AG04449 (cell line): ENCODE measurements at regions of chr18 and their contacts with region 1.

Region 1: GRCh38 chr18:63016270-63016669 is 300.9 kb downstream of the PHLPP1 start:
- DNase-seq: peak; percentile 3
- H3K4me3 ChIP-seq: no peak overlapping the region
- CTCF ChIP-seq: peak; percentile 63

Region 2: GRCh38 chr18:63031375-63031774 is 15.1 kb after region 1 on chr18:
- CTCF ChIA-PET with region 1: interaction called, 21 read pairs
- POLR2A ChIA-PET with region 1: no interaction called
- DNase-seq: no peak
- H3K4me3 ChIP-seq: no peak overlapping the region
- CTCF ChIP-seq: no peak

Region 3: GRCh38 chr18:63131106-63131958 is 115.1 kb after region 1 on chr18:
- CTCF ChIA-PET with region 1: interaction called, 14 read pairs
- POLR2A ChIA-PET with region 1: no interaction called
- DNase-seq: no peak
- H3K4me3 ChIP-seq: no peak overlapping the region
- CTCF ChIP-seq: peak; percentile 49

Region 4: DNA sequence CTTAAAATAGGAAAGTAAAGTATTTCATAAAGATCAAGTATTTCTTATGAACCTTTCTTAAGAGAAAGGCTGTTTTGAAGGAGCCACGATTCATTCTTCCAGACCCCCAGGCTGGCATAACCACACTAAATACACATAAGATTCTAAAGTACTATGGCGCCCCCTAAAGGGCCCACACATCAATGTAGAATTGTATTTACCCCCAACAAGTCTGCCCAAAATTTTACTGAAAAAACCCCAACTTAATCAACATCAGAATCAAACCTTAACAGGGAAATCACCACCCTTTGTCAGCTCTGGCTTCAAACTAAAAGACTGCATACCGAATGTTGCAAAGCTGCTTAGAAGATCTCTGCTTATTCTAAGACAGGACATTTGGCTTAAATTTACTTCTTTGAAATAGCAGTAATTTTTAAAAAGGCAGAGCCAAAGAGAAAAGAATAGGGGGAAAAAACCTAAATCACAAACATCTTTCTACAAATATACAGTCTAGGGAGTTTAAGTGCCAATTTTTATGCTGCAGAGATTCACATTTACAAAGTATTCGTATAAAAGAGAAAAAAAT is 323.7 kb after region 1 on chr18:
- CTCF ChIA-PET with region 1: interaction called, 30 read pairs
- POLR2A ChIA-PET with region 1: no interaction called
- DNase-seq: no peak
- H3K4me3 ChIP-seq: no peak overlapping the region
- CTCF ChIP-seq: peak; percentile 31